ENCODE measurements at regions of chr4 and their contacts with region 1.

Region 1: DNA sequence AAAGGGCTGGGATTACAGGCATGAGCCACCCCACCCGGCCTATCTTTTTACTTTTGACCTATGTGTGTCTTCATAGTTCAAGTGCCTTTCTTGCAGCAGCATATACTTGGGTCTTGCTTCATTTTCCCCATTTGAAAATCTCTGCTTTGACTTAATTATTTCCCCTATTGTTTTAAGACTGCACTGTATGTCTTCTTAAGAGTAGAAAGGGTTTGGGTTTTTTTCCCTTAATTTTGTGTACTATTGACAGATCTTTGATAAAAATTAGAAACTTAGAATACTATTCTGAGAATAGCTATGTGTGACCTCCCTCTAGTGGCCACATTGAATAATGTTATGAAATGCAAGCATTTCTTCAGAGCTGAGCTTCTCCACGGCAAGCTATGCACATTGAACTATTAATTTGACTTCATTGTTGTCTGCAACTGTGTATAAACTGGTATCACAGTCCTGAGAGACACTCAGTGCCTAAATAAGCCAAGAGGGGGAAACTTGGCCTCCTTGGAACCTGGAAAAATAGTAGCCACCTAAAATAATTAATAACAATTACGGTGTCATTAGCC is 8.7 kb upstream of the SLC25A4 start:
- DNase-seq: peak; percentile 21

Region 2: DNA sequence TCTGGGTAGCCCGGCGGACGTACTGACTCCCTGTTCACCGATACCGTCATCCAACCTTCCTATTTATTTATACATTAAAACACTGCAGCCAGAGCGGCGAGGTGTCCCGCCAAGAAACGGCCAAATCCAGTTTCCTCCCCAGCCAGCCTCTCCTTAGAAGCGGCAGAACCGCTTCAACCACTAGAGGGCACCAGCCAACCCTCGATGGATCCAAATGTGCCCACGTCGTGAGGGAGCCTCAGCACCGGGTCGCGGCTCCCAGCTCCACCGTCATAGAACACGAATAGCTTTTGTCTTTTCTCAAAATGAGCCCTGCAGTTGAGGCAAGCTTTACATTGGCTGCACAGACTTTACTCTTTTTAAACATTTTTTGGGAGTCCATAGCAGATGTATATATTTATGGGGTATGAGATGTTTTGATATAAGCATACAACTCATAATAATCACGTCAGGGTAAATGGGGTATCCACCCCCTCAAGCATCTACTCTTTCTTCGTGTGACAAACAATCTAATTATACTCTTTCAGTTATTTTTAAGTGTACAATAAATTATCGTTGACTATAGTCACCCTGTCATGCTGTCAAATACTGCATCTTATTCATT is 129.1 kb before region 1 on chr4:
- CTCF ChIA-PET with region 1: interaction called, 12 read pairs
- POLR2A ChIA-PET with region 1: no interaction called
- DNase-seq: peak; percentile 72

Region 3: GRCh38 chr4:185039508-185040273 is 94.7 kb before region 1 on chr4:
- CTCF ChIA-PET with region 1: interaction called, 19 read pairs
- POLR2A ChIA-PET with region 1: interaction called, 3 read pairs
- DNase-seq: peak; percentile 56

Region 4: DNA sequence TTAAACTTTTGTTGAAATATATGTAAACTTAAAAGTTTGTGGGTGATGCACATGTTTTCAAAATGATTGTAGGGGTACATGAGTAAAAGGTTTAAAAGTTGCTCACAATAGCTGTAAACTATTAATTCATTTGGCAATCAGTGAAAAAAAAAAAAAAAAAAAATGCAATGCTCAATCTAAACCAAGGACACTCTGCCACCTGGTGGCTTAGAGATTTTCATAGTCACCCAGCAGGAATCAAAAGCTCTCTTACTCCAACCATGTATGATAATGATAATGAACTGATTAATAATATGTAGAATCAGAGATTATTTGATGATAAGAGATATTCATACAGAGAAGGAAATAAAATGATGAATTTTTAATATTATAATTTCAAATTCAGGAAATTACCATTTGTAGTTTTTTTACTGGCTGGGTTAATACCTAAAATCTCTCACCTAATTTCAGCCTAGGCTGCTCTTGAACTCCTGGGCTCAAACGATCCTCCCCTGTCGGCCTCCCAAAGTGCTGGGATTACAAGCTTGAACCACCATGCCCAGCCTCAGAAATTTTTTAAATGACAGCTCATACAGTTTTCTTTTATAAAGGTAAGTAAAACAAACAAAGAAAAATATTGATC is 38.2 kb before region 1 on chr4:
- CTCF ChIA-PET with region 1: interaction called, 11 read pairs
- POLR2A ChIA-PET with region 1: no interaction called
- DNase-seq: peak; percentile 18

Region 5: DNA sequence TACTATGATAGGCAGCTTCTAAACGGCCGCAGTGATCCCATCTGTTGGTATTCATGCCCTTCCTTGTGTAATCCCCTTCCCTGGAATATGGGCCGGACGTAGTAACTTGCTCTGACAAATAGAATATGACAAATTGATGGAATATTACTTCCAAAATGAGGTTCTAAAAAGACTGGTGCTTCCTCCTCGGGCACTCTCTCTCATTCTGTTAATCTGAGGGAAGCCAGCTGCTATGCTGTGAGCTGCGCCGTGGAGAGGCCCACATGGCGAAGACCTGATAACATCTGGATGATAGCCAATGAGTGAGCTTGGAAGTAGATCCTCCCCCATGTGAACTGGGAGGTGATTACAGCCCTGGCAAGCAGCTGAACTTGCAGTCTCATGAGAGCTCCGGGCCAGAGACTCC is 18.6 kb before region 1 on chr4:
- CTCF ChIA-PET with region 1: interaction called, 15 read pairs
- POLR2A ChIA-PET with region 1: interaction called, 5 read pairs
- DNase-seq: peak; percentile 66

Region 6: GRCh38 chr4:185122681-185123345 is 11.6 kb before region 1 on chr4:
- CTCF ChIA-PET with region 1: interaction called, 18 read pairs
- POLR2A ChIA-PET with region 1: interaction called, 5 read pairs
- DNase-seq: no peak

Measured in HEK293T (cell line).